ENCODE measurements at regions of chr1 and their contacts with region 1.

Region 1: DNA sequence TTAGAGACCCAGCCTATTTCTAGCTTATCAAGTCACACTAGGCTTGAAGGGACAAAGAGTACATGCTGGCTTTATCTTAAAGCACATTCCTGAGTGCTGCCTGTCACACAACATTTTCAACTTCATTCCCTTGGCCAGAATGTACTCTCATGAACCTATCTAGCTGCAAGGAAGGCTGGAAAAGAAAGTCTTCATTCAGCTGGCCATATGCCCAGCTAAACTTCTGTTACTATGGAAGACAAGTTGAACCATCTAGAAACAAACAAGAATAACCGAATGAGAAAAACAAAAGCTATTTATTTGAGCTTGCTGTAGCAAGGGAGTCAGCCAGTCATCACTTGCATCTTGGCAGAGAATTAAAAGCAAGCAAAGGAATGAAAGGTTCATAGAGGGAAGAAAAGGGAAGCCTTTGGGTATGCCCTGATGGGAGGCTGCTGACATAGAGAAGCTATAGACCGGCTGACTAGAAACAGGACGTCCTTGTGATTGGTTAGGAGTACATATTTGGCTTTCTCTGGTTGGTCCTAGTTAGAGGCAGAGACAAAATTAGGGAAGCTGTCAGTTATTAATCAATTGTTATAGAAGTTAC is 108.4 kb downstream of the NEK7 start:
- DNase-seq: peak in 1 of 2 donors; percentile 65
- ATAC-seq: peak; percentile 76 to 97 (median 92)
- H3K4me3 ChIP-seq: no peak overlapping the region
- H3K27ac ChIP-seq: peak overlapping the region in 9 of 10 donors; percentile 51 to 85 (median 71)
- H3K4me1 ChIP-seq: peaks cover 0 to 75% (median 43%) of the 10 kb centered on the region in 9 donors
- H3K27me3 ChIP-seq: no peaks in the 10 kb centered on the region
- CTCF ChIP-seq: no peak

Region 2: GRCh38 chr1:197862671-197863070 is 402.5 kb before region 1 on chr1:
- intact Hi-C with region 1: no loop called
- DNase-seq: no peak
- ATAC-seq: no peak
- H3K4me3 ChIP-seq: no peak overlapping the region
- H3K27ac ChIP-seq: no peak overlapping the region
- H3K4me1 ChIP-seq: no peaks in the 10 kb centered on the region
- H3K27me3 ChIP-seq: peaks cover 0 to 4% (median 0%) of the 10 kb centered on the region in 7 donors
- CTCF ChIP-seq: no peak

Region 3: DNA sequence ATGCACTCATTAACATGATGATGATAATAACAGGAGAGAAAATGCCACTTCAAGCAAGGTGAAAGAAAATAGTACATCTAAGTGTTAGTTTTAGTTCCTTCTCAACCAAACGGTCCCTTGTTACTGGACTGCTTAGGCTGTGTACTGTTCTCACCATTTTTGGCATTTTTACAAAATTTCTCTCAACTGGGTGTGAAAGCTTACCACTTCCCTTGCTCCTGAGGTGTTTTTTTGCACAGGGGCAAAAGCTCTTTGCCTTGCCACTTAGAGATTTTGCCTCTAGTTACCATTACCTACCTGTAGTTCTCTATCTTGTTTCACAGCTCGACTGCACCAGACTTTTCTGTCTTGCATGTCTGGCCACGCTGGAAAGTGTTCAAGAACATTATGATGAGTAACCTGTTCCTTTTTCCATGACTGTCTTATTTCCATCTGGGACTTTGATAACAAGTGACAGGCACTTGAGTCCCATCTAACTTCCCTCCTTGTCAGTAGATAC is 97.7 kb before region 1 on chr1:
- intact Hi-C with region 1: loop called in 1 of 10 experiments (anchors 5 kb)
- DNase-seq: peak in 1 of 2 donors; percentile 30
- ATAC-seq: peak in 7 of 8 donors; percentile 31 to 84 (median 74)
- H3K4me3 ChIP-seq: no peak overlapping the region
- H3K27ac ChIP-seq: peak overlapping the region in 9 of 10 donors; percentile 41 to 73 (median 57)
- H3K4me1 ChIP-seq: peaks cover 12 to 97% (median 80%) of the 10 kb centered on the region in 9 donors
- H3K27me3 ChIP-seq: no peaks in the 10 kb centered on the region
- CTCF ChIP-seq: no peak

Region 4: GRCh38 chr1:198201956-198202784 is 63.0 kb before region 1 on chr1:
- intact Hi-C with region 1: loop called in 2 of 10 experiments (anchors 10 kb)
- DNase-seq: no peak
- ATAC-seq: peak in 5 of 8 donors; percentile 26 to 70 (median 51)
- H3K4me3 ChIP-seq: no peak overlapping the region
- H3K27ac ChIP-seq: peak overlapping the region in 8 of 10 donors; percentile 22 to 48 (median 32)
- H3K4me1 ChIP-seq: peaks cover 0 to 95% (median 62%) of the 10 kb centered on the region in 9 donors
- H3K27me3 ChIP-seq: no peaks in the 10 kb centered on the region
- CTCF ChIP-seq: no peak